ENCODE measurements at regions of chr12 and their contacts with region 1.

Region 1: DNA sequence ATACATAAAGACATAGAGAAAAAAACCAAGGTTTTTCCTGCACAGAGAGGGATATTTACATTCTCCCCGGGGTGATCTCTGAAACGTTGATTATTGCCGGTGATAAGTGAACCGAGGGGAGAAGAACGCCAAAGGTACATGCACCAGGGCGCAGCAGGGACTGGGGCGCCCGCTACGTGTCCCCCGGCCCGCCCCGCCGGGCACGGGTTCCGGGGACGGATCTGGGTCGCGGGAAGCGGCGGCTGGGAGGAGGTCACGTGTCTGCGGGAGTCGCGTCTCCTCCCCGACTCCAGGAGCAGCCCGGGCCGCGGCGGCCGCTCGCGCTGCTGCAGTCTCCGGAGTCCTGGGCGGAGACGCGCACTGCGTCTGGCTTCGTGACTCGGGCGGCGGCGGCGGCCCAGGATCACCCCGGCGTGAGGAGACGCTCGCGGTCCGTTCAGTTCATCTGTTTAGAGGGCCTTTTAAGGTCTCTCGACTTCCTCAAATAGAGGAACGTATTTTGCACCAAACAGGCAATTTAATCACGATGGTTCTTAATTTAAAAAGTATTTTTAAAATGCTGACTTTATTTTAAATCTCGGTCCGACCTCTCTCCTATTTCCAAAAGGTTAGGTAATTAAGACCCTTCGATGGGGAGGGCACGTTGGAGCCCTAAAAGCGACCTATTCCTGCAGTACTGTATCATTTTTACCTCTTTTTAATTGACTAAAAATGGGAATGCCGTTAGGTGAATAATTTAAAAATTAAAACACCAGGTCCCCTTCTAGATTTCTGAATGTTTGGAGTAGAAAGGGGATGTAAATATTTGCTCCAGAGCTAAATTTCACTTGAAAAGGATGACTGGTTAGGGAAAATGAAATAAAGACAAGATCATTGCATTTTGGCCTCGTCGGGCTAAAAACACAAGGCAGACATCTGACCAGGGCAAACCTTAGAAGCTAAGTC is 1.8 kb upstream of the BHLHE41 start:
- DNase-seq: peak; percentile 45
- H3K4me3 Mint-ChIP-seq: peak overlapping the region; percentile 79
- H3K27ac Mint-ChIP-seq: no peak overlapping the region
- H3K4me1 Mint-ChIP-seq: peaks cover 30% of the 10 kb centered on the region
- H3K27me3 Mint-ChIP-seq: peaks cover 72% of the 10 kb centered on the region

Region 2: DNA sequence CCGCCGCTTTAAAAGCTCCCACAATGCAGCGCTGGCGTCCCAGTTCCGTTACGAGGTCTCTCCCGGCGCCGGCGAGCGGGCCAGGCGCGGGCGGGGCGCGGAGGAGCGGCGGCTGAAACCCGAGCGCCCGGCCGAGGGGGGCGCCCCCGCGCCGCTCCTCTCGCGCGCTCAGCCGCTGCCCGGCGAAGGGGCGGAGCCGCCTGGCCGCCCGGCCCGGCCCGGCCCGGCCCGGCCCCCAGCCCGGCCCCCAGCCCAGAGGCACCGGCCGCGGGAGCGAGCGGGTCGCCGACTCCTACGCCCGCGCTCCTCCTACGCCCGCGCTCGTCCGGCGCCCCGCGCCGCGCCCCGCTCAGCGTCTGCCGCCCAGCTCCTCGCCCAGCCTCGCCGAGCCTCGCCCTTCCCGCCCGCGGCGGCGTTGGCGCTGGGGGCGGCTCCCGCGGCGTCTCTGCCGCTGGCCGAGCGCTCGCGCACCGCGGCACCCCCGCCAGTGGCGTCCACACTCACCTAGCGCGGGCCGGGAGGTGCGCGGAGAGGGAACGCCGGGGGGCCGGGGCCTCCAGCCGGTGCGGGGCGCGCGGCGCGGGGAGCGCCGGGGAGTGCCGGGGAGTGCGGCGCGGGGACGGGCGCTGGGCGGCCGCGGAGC is 168.1 kb before region 1 on chr12 and contains the start of gene RASSF8:
- CTCF ChIA-PET with region 1: no interaction called
- POLR2A ChIA-PET with region 1: no interaction called
- intact Hi-C with region 1: loop called (anchors 10 kb)
- DNase-seq: peak; percentile 11
- H3K4me3 Mint-ChIP-seq: peak within 1 kb of the TSS; percentile 69
- H3K27ac Mint-ChIP-seq: no peak within 1 kb of the TSS
- H3K4me1 Mint-ChIP-seq: peaks cover 11% of the 10 kb centered on the region
- H3K27me3 Mint-ChIP-seq: peaks cover 56% of the 10 kb centered on the region
- total RNA-seq, gene RASSF8: 0.26 to 0.29 TPM

Region 3: DNA sequence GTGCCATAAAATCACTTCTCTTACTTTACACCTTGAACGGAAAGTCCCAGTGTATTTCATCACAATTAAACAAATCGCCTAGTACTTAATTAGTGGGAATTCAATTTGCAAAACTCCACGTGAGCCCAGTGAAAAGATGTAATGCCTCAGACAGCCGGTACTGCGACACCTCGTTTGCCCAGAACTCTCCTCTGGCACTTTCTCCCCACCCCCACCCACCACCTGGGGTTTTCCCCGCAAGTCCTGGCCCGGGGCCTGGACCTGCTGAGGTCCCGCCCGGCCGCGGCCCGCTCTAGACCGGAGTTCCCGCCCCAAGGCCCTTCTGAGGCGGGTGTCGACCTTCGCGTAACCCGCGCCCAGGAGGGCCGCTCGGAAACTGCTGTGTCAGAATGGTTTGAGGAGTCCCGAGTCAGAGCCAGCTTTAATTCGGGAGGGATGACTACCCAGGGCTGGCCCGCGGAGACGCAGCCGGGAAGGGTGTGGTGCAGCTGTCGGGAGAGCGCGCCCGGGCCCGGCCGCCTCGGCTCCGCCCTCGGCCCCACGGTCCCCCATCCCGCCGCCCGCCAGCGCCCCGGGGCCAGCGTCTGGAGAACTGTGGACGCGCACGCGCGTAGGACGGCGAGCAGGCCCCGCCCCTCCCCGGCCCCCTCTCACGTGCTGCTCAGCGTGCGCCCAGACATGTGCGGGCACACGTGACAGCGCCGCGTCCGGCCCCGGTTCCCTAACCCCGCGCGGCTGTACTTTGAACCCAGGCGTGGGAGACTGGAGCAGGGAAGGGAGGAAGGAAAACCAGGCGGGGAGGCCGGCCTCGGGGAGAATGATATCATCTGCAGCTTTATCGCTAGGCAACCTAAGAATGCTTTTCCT is 12.5 kb before region 1 on chr12:
- CTCF ChIA-PET with region 1: interaction called, 4 read pairs
- POLR2A ChIA-PET with region 1: no interaction called
- intact Hi-C with region 1: loop called (anchors 1 kb)
- DNase-seq: peak; percentile 81
- H3K4me3 Mint-ChIP-seq: peak overlapping the region; percentile 63
- H3K27ac Mint-ChIP-seq: no peak overlapping the region
- H3K4me1 Mint-ChIP-seq: peaks cover 9% of the 10 kb centered on the region
- H3K27me3 Mint-ChIP-seq: peaks cover 41% of the 10 kb centered on the region

Region 4: GRCh38 chr12:26274441-26275312 is 148.1 kb after region 1 on chr12:
- CTCF ChIA-PET with region 1: interaction called, 3 read pairs
- POLR2A ChIA-PET with region 1: no interaction called
- intact Hi-C with region 1: loop called (anchors 2 kb)
- DNase-seq: peak; percentile 77
- H3K4me3 Mint-ChIP-seq: no peak overlapping the region
- H3K27ac Mint-ChIP-seq: no peak overlapping the region
- H3K4me1 Mint-ChIP-seq: peaks cover 16% of the 10 kb centered on the region
- H3K27me3 Mint-ChIP-seq: peaks cover 3% of the 10 kb centered on the region

Region 5: DNA sequence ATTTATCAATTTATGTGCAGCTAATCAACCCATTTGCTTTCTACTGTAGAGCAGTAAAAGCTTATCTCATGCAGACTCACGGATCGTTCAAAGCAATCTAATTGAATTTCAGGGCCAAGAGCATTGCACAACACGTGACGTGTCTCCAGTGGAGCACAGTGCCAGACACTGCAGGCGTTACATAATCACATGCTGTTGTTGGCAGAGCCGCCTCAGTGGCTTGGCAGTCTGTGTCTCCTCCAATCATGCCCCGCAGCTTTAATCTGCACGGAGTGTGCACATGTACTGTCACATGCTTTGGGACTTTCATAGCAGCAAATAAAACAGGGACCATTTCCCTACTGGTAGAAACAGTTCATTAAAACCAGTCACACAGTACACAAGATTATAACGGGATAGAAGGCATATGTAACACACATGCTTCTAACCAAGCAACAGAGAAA is 397.1 kb after region 1 on chr12:
- CTCF ChIA-PET with region 1: no interaction called
- POLR2A ChIA-PET with region 1: no interaction called
- intact Hi-C with region 1: loop called (anchors 5 kb)
- DNase-seq: no peak
- H3K4me3 Mint-ChIP-seq: no peak overlapping the region
- H3K27ac Mint-ChIP-seq: no peak overlapping the region
- H3K4me1 Mint-ChIP-seq: peaks cover 7% of the 10 kb centered on the region
- H3K27me3 Mint-ChIP-seq: no peaks in the 10 kb centered on the region

Region 6: GRCh38 chr12:26651566-26652188 is 525.1 kb after region 1 on chr12:
- CTCF ChIA-PET with region 1: interaction called, 12 read pairs
- POLR2A ChIA-PET with region 1: no interaction called
- intact Hi-C with region 1: no loop called
- DNase-seq: peak; percentile 50
- H3K4me3 Mint-ChIP-seq: no peak overlapping the region
- H3K27ac Mint-ChIP-seq: no peak overlapping the region
- H3K4me1 Mint-ChIP-seq: no peaks in the 10 kb centered on the region
- H3K27me3 Mint-ChIP-seq: no peaks in the 10 kb centered on the region

Measured in activated CD4-positive, alpha-beta memory T cell treated with anti-CD3 and anti-CD28 coated beads for 36 hours (primary cell).